Endothelial cell of umbilical vein (primary cell): ENCODE measurements at regions of chr6 and their contacts with region 1.

Region 1: DNA sequence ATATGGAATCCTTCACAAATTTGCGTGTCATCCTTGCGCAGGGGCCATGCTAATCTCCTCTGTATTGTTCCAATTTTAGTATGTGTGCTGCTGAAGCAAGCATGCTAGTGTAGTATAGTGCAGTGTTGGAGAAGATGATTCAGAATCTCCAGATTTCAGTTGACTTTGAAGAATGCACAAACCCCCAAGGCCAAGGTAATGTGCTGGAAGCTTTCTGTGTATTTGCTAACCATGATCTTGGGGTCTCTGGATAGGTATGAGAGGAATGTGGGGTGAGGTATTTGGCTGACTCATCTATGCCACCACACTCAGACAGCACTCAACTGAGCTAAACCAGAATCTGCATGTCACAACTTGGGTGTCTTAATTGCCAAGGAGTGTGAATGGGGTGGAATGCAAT is 42.6 kb upstream of the DEK start:
- DNase-seq: no peak
- H3K4me3 ChIP-seq: no peak overlapping the region
- H3K27ac ChIP-seq: no peak overlapping the region
- H3K4me1 ChIP-seq: no peaks in the 10 kb centered on the region
- H3K27me3 ChIP-seq: peaks cover 0 to 4% of the 10 kb centered on the region in 2 experiments
- CTCF ChIP-seq: no peak
- POLR2A ChIP-seq: no peak

Region 2: DNA sequence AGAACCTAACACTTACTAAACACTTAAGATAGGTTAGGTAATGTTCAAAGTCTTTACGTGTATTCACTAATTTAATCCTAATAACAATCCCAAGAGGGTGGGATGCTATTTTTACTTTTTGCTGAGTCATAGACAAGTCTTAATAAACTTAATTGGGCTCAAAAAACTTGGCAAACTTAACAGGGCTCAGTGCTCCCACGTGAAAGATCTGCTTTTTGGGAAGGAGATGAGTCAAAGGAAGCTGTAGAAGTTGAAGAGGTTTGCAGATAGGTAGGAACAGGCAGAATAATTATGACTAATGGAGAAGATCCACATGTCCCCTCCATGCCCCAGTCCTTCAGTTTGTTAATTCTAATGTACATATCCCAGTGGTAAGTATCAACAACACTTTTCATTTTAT is 1249.7 kb before region 1 on chr6:
- CTCF ChIA-PET with region 1: no interaction called
- POLR2A ChIA-PET with region 1: no interaction called
- dilution Hi-C with region 1: no loop called
- intact Hi-C with region 1: no loop called
- DNase-seq: no peak
- H3K4me3 ChIP-seq: no peak overlapping the region
- H3K27ac ChIP-seq: no peak overlapping the region
- H3K4me1 ChIP-seq: no peaks in the 10 kb centered on the region
- H3K27me3 ChIP-seq: no peaks in the 10 kb centered on the region
- CTCF ChIP-seq: no peak
- POLR2A ChIP-seq: no peak

Region 3: DNA sequence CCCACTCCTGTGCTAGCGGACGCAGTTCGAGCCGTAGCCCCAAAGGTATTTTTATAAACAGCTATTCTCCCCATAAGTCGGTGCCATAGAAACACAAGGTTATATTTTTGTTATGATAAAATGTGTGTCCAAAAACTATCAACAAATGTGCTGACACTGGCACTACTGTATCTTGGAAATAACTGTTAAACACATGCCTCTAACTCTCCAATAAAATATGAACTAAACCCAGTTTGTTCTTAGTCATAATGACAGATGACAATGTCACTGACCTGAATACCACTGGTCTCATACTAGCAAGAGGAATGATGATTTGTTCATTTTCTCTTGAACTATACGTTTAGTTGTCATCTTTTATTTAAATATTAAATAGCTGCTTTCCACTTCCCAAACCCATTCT is 548.9 kb before region 1 on chr6:
- CTCF ChIA-PET with region 1: no interaction called
- POLR2A ChIA-PET with region 1: no interaction called
- dilution Hi-C with region 1: no loop called
- intact Hi-C with region 1: no loop called
- DNase-seq: no peak
- H3K4me3 ChIP-seq: no peak overlapping the region
- H3K27ac ChIP-seq: no peak overlapping the region
- H3K4me1 ChIP-seq: no peaks in the 10 kb centered on the region
- H3K27me3 ChIP-seq: no peaks in the 10 kb centered on the region
- CTCF ChIP-seq: no peak
- POLR2A ChIP-seq: no peak

Region 4: DNA sequence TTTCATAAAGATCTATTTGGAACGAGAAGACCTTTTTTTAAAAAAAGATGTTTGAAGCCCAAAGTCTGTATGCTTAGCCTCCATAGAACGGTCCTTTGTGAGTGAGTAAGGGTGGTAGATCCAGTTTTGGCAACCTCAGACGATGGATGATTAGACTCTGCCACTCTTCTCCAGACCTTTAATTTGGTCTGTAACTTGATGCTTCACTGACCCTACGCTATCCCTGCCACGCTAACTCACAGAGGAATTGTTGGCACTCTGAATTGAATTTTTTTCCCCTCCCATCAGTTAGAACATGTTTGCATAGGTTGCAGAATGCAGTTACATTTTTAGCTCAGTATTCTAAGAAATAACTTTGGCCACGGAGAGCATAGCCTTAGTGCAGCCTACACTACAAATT is 26.9 kb before region 1 on chr6:
- CTCF ChIA-PET with region 1: interaction called, 3 read pairs
- POLR2A ChIA-PET with region 1: interaction called, 10 read pairs
- dilution Hi-C with region 1: no loop called
- intact Hi-C with region 1: no loop called
- DNase-seq: no peak
- H3K4me3 ChIP-seq: no peak overlapping the region
- H3K27ac ChIP-seq: no peak overlapping the region
- H3K4me1 ChIP-seq: no peaks in the 10 kb centered on the region
- H3K27me3 ChIP-seq: peaks cover 32 to 45% of the 10 kb centered on the region in 2 experiments
- CTCF ChIP-seq: no peak
- POLR2A ChIP-seq: no peak

Region 5: DNA sequence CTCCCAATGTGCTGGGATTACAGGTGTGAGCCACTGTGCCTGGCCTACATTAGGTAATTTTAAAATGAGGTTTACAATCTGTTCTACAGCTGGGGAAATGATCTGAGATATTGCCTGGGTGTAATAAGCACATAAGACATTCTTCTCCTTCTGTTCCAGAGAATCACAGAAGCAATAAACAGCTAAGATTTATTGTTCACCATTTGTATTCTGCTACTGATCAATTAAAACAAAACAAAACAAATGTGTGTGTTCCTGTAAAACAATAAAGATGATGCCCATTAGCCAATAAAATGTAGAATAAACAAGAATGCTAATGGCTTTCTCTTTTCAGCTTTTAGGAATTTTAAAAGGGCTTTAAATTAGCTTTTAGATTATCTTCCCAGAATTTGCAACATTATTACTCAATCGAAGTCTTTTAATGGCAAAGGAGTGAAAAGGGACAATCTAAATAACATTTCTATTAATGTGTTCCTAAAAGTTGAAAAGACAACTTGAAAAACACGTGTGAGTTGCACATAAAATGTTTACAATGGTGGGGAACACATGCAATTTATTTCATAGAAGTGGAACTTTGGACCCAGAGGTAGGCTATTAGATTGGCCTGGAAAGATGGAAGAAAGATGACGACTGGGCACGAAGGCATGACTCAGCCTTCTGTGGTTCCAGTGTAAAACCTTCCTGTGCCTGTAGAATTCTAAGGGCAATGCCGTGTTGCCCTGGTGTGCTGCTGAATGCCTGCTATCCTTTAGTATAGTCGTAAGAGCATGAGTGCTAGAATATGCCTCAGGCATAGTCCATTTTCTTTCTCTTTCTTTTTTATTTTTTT is 13.7 kb before region 1 on chr6:
- CTCF ChIA-PET with region 1: no interaction called
- POLR2A ChIA-PET with region 1: no interaction called
- dilution Hi-C with region 1: no loop called
- intact Hi-C with region 1: no loop called
- DNase-seq: no peak
- H3K4me3 ChIP-seq: no peak overlapping the region
- H3K27ac ChIP-seq: no peak overlapping the region
- H3K4me1 ChIP-seq: no peaks in the 10 kb centered on the region
- H3K27me3 ChIP-seq: peaks cover 0 to 1% of the 10 kb centered on the region in 2 experiments
- CTCF ChIP-seq: no peak
- POLR2A ChIP-seq: no peak